Vagina (tissue), 2 donors: ENCODE measurements at regions of chr9 and their contacts with region 1.

Region 1: GRCh38 chr9:1156801-1157550 is 106.8 kb downstream of the DMRT2 start:
- DNase-seq: no peak
- H3K4me3 ChIP-seq: no peak overlapping the region
- H3K27ac ChIP-seq: no peak overlapping the region
- H3K4me1 ChIP-seq: no peaks in the 10 kb centered on the region
- H3K27me3 ChIP-seq: no peaks in the 10 kb centered on the region
- CTCF ChIP-seq: no peak
- POLR2A ChIP-seq: no peak

Region 2: GRCh38 chr9:1087120-1087881 is 69.7 kb before region 1 on chr9:
- intact Hi-C with region 1: no loop called
- DNase-seq: no peak
- H3K4me3 ChIP-seq: no peak overlapping the region
- H3K27ac ChIP-seq: no peak overlapping the region
- H3K4me1 ChIP-seq: no peaks in the 10 kb centered on the region
- H3K27me3 ChIP-seq: no peaks in the 10 kb centered on the region
- CTCF ChIP-seq: no peak
- POLR2A ChIP-seq: no peak

Region 3: DNA sequence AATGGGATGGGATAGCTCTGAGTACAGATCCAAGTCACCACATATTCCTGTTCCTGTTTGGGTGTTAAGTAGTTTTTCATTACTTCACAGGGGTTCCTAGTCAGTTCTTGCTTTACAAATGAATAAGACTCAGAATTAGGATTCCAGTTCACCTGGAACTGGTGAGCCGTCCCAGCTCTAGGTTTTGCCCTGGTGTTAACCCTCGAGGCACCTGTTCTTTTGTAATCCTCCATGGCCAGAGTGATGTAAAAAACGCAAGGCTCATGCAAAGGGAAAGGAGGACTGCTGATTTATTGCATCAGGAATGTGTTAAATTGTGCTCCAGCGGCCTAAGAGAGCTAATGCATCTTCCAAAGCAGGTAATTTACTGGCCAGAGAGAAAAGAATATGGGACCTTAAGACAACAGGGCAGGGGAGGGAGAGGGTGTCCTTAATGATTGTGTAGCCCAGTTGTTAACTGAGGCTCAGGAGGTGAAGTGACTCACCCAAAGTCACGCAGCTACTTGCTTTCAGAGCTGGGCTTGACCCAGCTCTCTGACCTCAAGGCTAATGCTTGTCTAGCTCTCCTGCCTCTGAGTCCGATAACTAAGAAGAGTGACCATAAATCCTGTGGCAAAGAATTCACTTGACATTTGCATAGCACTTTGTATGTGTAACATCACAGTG is 36.3 kb before region 1 on chr9:
- intact Hi-C with region 1: loop called (anchors 2 kb)
- DNase-seq: no peak
- H3K4me3 ChIP-seq: no peak overlapping the region
- H3K27ac ChIP-seq: no peak overlapping the region
- H3K4me1 ChIP-seq: no peaks in the 10 kb centered on the region
- H3K27me3 ChIP-seq: no peaks in the 10 kb centered on the region
- CTCF ChIP-seq: no peak
- POLR2A ChIP-seq: no peak